Tibial artery (tissue), 4 donors: ENCODE measurements at regions of chr5 and their contacts with region 1.

Region 1: DNA sequence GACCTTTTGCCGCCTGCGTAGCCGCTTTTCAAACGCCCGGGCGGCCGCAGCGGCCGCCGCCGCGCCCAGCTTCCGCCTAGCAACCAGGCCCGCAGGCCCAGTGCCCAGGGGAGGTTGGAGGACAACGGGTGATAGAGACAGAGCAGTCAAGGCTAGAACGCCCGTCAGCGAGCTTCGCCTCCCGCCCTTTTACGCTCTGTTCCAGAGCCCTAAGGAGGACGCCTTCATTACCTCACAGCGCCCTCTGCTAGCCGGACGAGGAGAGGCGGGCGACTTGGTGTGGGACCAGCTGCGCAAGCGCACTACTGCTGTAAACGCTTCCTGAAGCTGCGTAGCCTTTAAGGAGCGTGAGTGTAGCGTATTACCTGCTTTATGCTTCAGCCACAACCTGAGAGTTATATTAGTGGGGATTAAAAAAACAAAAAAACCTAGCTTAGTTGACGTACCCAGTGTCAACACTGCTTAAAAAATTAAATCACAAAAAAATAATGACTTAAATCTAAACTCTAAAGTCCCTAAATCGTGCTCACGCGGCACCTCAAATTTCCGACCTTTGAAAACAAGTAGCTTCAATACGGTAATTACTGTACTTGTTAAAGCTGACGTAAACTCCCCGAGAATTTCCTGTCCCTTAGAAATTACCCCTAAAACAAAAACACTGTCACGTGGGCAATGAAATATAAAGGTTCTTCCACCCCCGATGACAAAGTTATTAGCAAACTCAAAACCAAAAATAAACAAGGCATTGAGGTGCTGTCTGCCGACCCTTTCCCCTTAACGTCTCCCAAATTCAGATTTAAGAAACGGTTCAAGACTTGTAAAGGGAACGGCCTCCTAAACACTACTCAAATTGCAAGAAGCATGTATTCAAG is at the start of gene CEP120:
- DNase-seq: peak; percentile 99
- H3K4me3 ChIP-seq: peak within 1 kb of the TSS; percentile 94 to 95
- H3K27ac ChIP-seq: peak within 1 kb of the TSS; percentile 95
- H3K4me1 ChIP-seq: peaks cover 0 to 29% (median 18%) of the 10 kb centered on the region in 4 donors
- H3K27me3 ChIP-seq: no peaks in the 10 kb centered on the region
- CTCF ChIP-seq: peak; percentile 76 to 78

Region 2: DNA sequence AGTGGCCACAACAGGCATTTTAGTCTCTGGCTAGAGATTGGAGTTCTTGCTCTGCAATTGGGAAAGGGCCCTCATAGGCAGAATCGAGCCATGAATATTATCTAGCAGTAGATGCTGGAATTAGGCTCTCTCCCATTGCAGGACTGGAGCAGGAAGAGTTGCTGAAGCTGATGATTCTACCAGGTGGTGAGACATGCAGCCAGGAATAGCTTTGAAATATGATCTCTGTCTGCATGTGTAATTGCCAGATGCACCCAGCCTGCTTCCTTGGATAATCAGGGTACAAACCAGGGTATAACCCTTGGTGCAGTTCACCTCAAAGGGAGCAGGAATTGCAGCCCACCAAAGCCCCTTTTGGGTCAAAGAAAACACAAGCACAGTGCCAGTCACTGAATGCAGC is 1783.2 kb before region 1 on chr5:
- intact Hi-C with region 1: no loop called
- DNase-seq: no peak
- H3K4me3 ChIP-seq: no peak overlapping the region
- H3K27ac ChIP-seq: no peak overlapping the region
- H3K4me1 ChIP-seq: peaks cover 0 to under 1% (median 0%) of the 10 kb centered on the region in 4 donors
- H3K27me3 ChIP-seq: no peaks in the 10 kb centered on the region
- CTCF ChIP-seq: no peak

Region 3: DNA sequence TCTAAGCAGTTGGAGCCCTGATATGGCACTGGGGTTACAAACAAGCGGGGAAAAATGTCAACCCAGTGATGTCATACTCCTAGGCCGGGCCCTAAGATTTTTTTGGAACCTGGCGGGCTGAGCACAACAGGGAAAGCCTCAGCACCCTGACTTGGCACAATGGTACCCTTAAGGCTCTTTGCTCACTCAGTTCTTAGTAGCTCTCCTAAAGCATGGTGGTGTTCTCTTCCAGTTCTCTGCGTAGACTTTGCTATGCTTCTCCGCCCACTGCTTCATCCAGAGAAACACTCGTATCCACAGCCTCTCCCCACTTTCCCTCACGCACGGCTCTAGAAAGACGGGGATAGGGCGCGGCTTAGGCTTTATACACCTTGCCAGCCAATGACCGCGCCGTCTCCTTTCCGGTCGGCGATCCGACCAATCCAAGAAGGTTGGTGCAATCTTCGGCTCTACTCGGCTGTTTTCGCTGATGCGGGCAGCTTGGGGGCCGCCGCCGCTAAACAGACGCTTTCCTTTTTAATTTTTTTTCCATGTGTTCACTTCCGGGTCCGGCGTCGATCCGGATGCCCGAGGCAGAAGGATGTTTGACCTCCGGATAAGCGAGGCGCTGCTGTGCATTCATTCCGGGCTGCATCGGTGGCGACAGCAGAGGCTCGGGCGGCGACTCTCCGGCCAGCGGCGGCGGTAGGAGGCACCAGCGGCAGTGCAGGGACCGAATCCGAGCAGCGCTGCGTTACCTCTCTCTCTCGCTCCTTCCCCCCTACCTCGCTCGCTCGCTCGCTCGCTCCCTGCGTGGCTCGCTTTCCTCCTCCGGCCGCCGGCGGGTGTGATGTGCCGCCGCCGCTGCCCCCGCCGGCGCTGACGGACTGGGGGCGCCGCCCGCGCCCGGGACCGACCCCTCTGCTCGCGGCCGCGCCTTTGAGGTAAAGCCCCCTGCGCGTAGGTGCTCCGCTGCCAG is 88.4 kb after region 1 on chr5 and contains the start of gene CSNK1G3:
- intact Hi-C with region 1: loop called (anchors 1 kb)
- DNase-seq: peak; percentile 97 to 99
- H3K4me3 ChIP-seq: peak within 1 kb of the TSS; percentile 65 to 80
- H3K27ac ChIP-seq: peak within 1 kb of the TSS; percentile 85 to 86
- H3K4me1 ChIP-seq: peaks cover 0 to 11% (median 4%) of the 10 kb centered on the region in 4 donors
- H3K27me3 ChIP-seq: no peaks in the 10 kb centered on the region
- CTCF ChIP-seq: no peak

Region 4: GRCh38 chr5:123610665-123611405 is 187.3 kb after region 1 on chr5:
- intact Hi-C with region 1: loop called (anchors 10 kb)
- DNase-seq: no peak
- H3K4me3 ChIP-seq: no peak overlapping the region
- H3K27ac ChIP-seq: peak overlapping the region in 1 of 2 donors; percentile 11
- H3K4me1 ChIP-seq: no peaks in the 10 kb centered on the region
- H3K27me3 ChIP-seq: no peaks in the 10 kb centered on the region
- CTCF ChIP-seq: peak; percentile 91 to 95

Region 5: GRCh38 chr5:124477577-124477976 is 1054.1 kb after region 1 on chr5:
- intact Hi-C with region 1: no loop called
- DNase-seq: no peak
- H3K4me3 ChIP-seq: no peak overlapping the region
- H3K27ac ChIP-seq: no peak overlapping the region
- H3K4me1 ChIP-seq: no peaks in the 10 kb centered on the region
- H3K27me3 ChIP-seq: no peaks in the 10 kb centered on the region
- CTCF ChIP-seq: no peak